RWPE1 (cell line): ENCODE measurements at regions of chr4 and their contacts with region 1.

Region 1: GRCh38 chr4:152640058-152640833 is 39.6 kb downstream of the TMEM154 start:
- DNase-seq: peak; percentile 36
- H3K27ac ChIP-seq: no peak overlapping the region
- CTCF ChIP-seq: peak; percentile 60

Region 2: GRCh38 chr4:152500800-152501434 is 139.3 kb before region 1 on chr4:
- CTCF ChIA-PET with region 1: interaction called, 15 read pairs
- POLR2A ChIA-PET with region 1: no interaction called
- DNase-seq: peak; percentile 46
- H3K27ac ChIP-seq: no peak overlapping the region
- CTCF ChIP-seq: peak; percentile 82

Region 3: DNA sequence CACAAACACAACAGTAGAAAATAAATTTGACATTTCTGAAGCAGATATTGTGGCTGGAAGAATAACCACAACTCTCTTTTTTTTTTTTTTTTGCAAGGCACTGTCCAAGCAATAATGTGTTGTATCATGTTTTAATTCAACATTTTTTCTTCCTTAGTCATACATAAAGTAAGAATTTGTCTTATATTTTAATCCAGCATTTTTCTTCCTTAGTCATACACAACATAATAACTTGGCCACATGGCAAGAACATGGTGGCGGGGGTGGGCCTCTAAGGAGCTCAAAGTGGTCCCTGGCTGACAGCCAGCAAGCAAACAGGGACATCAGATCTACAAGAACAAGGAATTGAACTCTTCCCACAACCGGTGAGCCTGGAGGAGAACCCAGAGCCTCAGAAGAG is 124.6 kb before region 1 on chr4:
- CTCF ChIA-PET with region 1: no interaction called
- POLR2A ChIA-PET with region 1: no interaction called
- DNase-seq: peak; percentile 53
- H3K27ac ChIP-seq: peak overlapping the region; percentile 84
- CTCF ChIP-seq: no peak